ENCODE measurements at regions of chr6 and their contacts with region 1.

Region 1: GRCh38 chr6:30769088-30769852 is 24.9 kb upstream of the IER3 start:
- DNase-seq: peak; percentile 26 to 75 (median 52)
- ATAC-seq: peak; percentile 79 to 88
- H3K4me3 Mint-ChIP-seq: peak overlapping the region; percentile 45 to 84 (median 72)
- H3K27ac Mint-ChIP-seq: peak overlapping the region; percentile 53 to 94 (median 86)
- H3K4me1 Mint-ChIP-seq: peaks cover 37 to 75% (median 65%) of the 10 kb centered on the region in 4 donors
- H3K27me3 Mint-ChIP-seq: no peaks in the 10 kb centered on the region

Region 2: DNA sequence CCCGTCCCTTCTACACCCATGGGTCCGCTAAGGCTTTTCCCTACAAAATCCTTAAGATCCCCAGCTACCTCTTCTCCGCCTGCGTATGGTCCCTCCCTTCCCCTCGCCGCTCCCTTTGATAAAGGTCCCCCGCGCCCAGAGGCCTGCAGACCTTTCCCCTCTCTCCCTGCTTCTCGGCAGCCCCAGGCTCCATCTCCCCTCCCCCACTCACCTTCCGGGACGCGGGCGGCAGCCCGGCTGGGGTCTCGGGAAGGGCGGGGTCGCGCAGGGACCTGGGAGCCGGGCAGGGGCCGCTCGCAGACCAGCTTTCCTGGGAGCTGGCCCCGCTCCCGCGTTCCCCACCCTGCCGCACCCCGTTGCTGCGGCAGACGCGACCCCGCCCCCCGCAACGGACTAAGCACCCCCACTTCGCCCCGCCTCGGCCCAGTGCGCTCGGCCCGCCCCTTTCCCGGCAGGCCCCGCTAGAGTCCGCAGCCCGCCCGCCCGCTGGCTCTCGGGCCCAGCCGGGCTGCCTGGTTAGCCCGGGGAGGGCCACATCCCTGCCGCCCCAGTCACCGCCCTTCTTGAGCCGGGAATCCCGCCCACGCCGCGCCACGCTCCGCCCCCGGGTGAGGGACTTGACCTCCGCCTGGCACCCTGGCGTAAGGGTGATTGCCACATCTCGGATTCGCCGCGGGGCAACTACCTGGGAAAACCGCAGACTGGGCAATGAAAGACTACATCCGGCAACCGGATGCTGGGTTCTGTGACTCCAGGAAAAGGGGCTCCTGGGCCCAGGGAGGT is 26.8 kb before region 1 on chr6 and contains the start of gene FLOT1:
- POLR2A ChIA-PET with region 1: interaction called, 10 read pairs
- DNase-seq: peak in 9 of 10 donors; percentile 51 to 83 (median 67)
- ATAC-seq: peak; percentile 49 to 54
- H3K4me3 Mint-ChIP-seq: peak within 1 kb of the TSS; percentile 88 to 97 (median 94)
- H3K27ac Mint-ChIP-seq: peak within 1 kb of the TSS; percentile 89 to 96 (median 92)
- H3K4me1 Mint-ChIP-seq: peaks cover 42 to 75% (median 67%) of the 10 kb centered on the region in 4 donors
- H3K27me3 Mint-ChIP-seq: no peaks in the 10 kb centered on the region
- polyA plus RNA-seq, gene FLOT1: 76.0 to 98.4 (median 78.4) TPM

Region 3: DNA sequence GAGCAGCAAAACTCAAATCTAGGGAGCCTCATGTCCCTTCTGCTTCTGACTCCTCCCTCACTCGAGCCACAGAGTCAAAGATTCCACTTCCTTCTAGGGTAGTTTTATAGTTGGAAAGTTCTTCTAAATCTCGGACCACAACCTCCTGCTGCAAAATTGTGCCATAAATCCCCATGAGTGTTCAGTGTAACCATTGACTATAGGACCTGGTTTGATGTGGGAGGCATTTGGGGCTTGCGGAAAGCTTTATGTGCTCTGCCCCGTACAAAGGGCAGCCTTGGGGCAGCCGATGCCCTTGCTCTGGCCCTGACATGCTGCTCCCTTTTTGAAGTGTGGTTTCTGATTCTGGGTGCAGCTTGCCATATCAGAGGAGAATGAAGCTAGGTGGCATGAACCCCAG is 18.7 kb after region 1 on chr6:
- POLR2A ChIA-PET with region 1: interaction called, 15 read pairs
- DNase-seq: no peak
- ATAC-seq: peak in 1 of 2 donors; percentile 65
- H3K4me3 Mint-ChIP-seq: peak overlapping the region in 3 of 10 donors; percentile 17 to 73 (median 45)
- H3K27ac Mint-ChIP-seq: peak overlapping the region in 4 of 10 donors; percentile 4 to 49 (median 42)
- H3K4me1 Mint-ChIP-seq: peaks cover 17 to 48% (median 42%) of the 10 kb centered on the region in 4 donors
- H3K27me3 Mint-ChIP-seq: no peaks in the 10 kb centered on the region

Region 4: DNA sequence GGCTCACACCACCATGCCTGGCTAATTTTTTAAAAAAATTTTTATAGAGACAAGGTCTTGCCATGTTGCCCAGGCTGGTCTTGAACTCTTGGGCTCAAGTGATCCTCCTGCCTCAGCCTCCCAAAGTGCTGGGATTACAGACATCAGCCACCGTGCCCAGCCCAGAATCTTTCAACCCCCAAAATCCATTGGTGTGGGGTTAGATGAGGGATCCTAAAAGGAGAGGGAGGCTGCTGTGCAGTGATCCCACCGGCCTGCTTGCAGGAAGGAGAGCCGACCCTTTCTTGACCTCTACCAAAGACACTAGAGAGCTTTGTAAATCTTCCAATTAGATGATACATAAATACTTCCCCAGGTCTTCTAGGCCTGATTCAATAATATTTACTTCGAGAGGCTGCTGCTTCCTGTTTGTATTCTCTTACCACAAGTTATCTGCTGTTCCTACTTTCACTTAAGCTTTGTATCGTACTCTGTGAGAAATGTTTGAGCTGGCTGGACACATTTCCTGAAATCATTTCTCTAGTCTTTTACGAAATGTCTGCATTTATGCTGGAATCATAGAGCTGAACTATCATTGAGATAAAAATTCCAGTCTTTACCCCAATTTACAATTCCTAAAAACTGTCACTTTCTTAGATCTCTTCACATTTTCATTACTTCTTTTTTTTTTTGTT is 24.4 kb after region 1 on chr6:
- POLR2A ChIA-PET with region 1: interaction called, 15 read pairs
- DNase-seq: peak in 3 of 10 donors; percentile 39 to 60 (median 55)
- ATAC-seq: peak; percentile 95 to 97
- H3K4me3 Mint-ChIP-seq: peak overlapping the region; percentile 51 to 89 (median 78)
- H3K27ac Mint-ChIP-seq: peak overlapping the region; percentile 93 to 99 (median 96)
- H3K4me1 Mint-ChIP-seq: peaks cover 20 to 54% (median 50%) of the 10 kb centered on the region in 4 donors
- H3K27me3 Mint-ChIP-seq: no peaks in the 10 kb centered on the region

Measured in naive thymus-derived CD8-positive, alpha-beta T cell (primary cell).